ENCODE measurements at regions of chr7 and their contacts with region 1.

Region 1: DNA sequence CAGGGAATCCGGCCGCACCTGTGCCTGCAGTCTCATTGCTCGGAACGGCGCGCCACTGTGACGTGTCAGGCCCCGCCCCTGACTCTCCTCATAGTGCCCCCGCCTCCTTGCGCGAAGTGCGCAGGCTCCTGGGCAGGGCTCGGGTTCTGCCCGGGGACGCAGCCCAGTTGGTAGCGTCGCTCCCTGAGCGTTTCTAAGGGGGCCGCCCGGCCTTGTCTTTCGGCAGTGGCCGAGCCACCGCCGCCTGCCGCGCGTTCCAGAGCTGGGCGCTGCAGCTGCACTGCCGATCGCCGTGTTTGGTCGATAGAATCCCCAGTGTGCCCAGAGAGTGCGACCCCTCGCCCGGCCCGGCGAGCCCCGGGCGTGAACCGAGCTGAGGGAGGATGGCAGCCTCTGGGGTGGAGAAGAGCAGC is at the start of gene KLHL7:
- DNase-seq: peak; percentile 98
- ATAC-seq: peak; percentile 99 to 100 (median 100)
- H3K4me3 ChIP-seq: peak within 1 kb of the TSS; percentile 94
- H3K27ac ChIP-seq: peak within 1 kb of the TSS; percentile 94
- H3K4me1 ChIP-seq: peaks cover 35% of the 10 kb centered on the region
- H3K27me3 ChIP-seq: no peaks in the 10 kb centered on the region
- CTCF ChIP-seq: no peak
- total RNA-seq, gene KLHL7: 11.6 to 14.6 (median 13.8) TPM

Region 2: GRCh38 chr7:23181684-23182553 is 76.3 kb after region 1 on chr7 and contains the start of gene NUP42:
- intact Hi-C with region 1: loop called (anchors 1 to 2 kb)
- DNase-seq: peak; percentile 95 to 97
- ATAC-seq: peak; percentile 98 to 99 (median 98)
- H3K4me3 ChIP-seq: peak within 1 kb of the TSS; percentile 93
- H3K27ac ChIP-seq: peak within 1 kb of the TSS; percentile 98
- H3K4me1 ChIP-seq: peaks cover 20% of the 10 kb centered on the region
- H3K27me3 ChIP-seq: no peaks in the 10 kb centered on the region
- CTCF ChIP-seq: no peak
- total RNA-seq, gene NUP42: 13.9 to 18.3 (median 16.2) TPM

Measured in psoas muscle (tissue), 8 donors.